ENCODE measurements at regions of chr1 and their contacts with region 1.

Region 1: DNA sequence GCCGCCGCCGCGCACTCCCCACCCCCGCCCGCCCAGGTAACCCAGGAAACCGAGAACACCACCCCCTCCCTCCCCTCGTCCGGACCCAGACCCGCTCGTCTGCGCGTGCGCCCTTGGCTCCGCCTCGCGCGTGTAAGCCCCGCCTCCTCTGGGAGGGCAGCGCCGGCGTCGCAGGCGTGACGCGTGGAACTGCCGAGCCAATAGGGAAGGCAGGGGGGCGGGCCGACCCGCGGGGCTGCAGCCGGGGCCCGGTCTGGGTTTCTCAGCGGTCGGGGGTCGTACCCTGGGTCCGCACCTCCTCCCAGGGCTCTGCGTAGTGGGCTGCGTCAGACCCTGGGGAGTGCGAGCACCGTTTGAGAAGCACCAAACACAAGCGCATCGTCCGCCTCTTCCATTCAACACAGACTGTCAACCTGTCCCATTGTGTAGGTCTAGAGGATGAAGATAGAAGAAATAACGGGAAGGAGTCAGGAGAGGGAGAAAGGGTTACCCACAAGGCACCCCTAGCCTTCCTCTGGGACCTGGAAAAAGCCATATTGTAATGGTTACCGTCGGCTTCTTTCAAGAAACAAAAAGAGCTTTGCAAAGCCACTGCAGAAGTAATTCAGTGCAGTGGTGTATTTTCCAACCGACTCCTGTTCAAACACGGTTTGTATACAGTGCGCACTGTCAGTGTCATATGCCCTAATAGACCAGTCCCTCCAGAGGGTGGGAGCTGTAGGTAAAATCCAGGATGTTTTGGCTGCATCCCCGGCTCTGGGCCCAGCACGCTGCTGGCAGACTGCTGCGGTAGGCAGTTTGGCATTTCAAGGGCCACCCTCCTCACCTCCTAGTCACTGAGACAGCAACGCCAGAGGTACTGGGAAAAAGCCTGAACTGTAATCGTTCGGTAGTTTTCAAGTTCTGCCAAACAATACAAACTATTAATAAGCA is 473 bp upstream of the LYST start:
- DNase-seq: peak; percentile 99
- ATAC-seq: peak; percentile 71
- H3K4me3 Mint-ChIP-seq: peak overlapping the region; percentile 98
- H3K27ac Mint-ChIP-seq: peak overlapping the region; percentile 99
- H3K4me1 Mint-ChIP-seq: peaks cover 64% of the 10 kb centered on the region
- H3K27me3 Mint-ChIP-seq: no peaks in the 10 kb centered on the region
- CTCF ChIP-seq: no peak

Region 2: DNA sequence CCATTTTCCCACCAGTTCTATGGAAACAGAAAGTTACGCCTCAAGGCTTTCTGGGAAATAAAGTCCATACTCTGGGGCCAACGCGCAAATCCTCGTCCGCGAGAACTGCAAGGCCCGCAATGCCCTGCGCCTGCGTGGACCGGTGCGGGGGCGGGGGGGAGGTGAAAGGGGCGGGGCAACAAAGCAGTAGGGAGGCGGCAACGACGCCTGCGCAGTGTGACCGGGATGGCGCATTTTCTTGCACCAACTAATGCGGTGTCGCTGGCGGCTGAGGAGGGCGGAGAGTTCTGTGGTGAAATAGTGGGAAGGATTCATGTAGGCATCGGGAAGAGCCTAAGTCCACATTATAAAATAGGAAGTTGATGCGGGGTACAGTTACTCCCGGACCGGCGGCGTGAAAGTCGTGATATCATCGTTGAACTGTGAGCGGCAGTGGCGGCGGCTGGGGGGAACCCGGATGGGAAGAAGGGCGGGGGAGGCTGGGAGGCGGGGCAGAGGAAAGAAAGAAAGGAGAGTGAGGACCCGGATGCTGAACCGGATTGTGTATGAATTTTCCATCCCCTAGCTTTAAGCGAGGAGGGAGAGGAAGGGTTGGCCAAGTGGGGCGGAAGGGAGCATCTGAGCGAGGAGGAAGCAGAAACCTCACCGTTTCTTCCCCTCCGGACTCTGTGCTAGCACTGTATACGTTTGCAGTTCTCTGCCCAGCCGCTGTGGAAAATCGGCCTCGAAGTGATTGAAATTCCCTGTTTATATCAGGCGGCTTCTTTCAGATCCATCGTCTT is 538.6 kb before region 1 on chr1 and contains the start of gene GGPS1:
- CTCF ChIA-PET with region 1: no interaction called
- POLR2A ChIA-PET with region 1: no interaction called
- intact Hi-C with region 1: loop called (anchors 2 kb)
- DNase-seq: peak; percentile 90
- ATAC-seq: peak; percentile 75
- H3K4me3 Mint-ChIP-seq: no peak within 1 kb of the TSS
- H3K27ac Mint-ChIP-seq: no peak within 1 kb of the TSS
- H3K4me1 Mint-ChIP-seq: peaks cover 27% of the 10 kb centered on the region
- H3K27me3 Mint-ChIP-seq: no peaks in the 10 kb centered on the region
- CTCF ChIP-seq: no peak
- total RNA-seq, gene GGPS1: 25.4 and 33.8 TPM in 2 replicates

Region 3: DNA sequence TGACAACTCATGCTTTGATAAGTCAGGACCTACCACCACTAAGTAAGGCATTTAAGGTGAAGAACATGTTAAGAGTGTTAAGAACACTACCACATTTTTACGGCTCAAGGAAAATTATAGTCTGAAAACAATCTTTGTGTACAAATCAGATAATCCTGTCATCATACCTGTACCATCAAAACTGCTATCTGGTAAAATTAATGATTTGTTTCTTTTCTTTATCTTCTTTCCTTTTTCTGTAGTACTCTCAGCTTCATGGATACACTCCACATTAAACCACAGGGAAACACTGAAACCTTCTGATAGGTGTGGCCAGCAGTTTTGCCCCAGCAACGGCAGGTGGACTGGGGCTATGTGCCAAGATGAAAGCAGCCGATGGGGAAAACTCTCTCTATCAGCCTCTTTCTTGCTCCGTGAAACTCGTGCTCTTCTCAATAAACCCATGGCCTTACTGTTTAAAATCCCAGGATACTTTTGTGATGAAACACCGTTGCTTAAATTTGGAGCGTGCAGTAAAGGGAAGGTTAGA is 75.6 kb before region 1 on chr1:
- CTCF ChIA-PET with region 1: no interaction called
- POLR2A ChIA-PET with region 1: no interaction called
- intact Hi-C with region 1: no loop called
- DNase-seq: no peak
- ATAC-seq: no peak
- H3K4me3 Mint-ChIP-seq: no peak overlapping the region
- H3K27ac Mint-ChIP-seq: peak overlapping the region; percentile 56
- H3K4me1 Mint-ChIP-seq: peaks cover 13% of the 10 kb centered on the region
- H3K27me3 Mint-ChIP-seq: no peaks in the 10 kb centered on the region
- CTCF ChIP-seq: no peak

Region 4: DNA sequence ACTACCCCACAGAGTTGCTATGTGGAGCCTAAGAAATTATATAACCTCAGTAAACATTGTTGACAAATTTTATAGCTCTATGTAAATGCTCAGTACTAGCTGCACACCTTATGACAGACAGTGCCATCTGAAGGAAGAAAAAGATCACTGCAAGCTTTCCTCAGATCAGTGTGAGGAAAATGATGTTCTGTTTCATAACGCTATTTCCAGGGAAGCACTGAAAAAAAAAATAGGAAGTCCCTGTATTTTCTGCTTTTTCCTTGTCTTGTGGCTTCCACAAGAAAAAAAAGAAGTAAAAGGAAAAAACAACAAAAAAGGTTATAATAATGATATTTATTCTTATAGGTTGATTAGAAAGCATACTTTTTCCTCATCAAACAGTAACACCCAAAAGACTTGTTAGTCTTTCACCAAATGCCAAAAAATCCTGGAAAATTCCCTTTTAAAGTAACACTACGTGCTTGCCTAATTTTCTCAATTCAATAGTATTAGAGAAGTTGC is 23.7 kb before region 1 on chr1:
- CTCF ChIA-PET with region 1: interaction called, 11 read pairs
- POLR2A ChIA-PET with region 1: interaction called, 39 read pairs
- intact Hi-C with region 1: loop called (anchors 1 kb)
- DNase-seq: no peak
- ATAC-seq: peak; percentile 60
- H3K4me3 Mint-ChIP-seq: no peak overlapping the region
- H3K27ac Mint-ChIP-seq: peak overlapping the region; percentile 62
- H3K4me1 Mint-ChIP-seq: peaks cover 86% of the 10 kb centered on the region
- H3K27me3 Mint-ChIP-seq: no peaks in the 10 kb centered on the region
- CTCF ChIP-seq: no peak

Region 5: GRCh38 chr1:235883261-235883927 is 16.2 kb after region 1 on chr1:
- CTCF ChIA-PET with region 1: no interaction called
- POLR2A ChIA-PET with region 1: interaction called, 24 read pairs
- intact Hi-C with region 1: loop called (anchors 1 kb)
- DNase-seq: no peak
- ATAC-seq: peak; percentile 15
- H3K4me3 Mint-ChIP-seq: no peak overlapping the region
- H3K27ac Mint-ChIP-seq: no peak overlapping the region
- H3K4me1 Mint-ChIP-seq: peaks cover 59% of the 10 kb centered on the region
- H3K27me3 Mint-ChIP-seq: no peaks in the 10 kb centered on the region
- CTCF ChIP-seq: no peak

Region 6: DNA sequence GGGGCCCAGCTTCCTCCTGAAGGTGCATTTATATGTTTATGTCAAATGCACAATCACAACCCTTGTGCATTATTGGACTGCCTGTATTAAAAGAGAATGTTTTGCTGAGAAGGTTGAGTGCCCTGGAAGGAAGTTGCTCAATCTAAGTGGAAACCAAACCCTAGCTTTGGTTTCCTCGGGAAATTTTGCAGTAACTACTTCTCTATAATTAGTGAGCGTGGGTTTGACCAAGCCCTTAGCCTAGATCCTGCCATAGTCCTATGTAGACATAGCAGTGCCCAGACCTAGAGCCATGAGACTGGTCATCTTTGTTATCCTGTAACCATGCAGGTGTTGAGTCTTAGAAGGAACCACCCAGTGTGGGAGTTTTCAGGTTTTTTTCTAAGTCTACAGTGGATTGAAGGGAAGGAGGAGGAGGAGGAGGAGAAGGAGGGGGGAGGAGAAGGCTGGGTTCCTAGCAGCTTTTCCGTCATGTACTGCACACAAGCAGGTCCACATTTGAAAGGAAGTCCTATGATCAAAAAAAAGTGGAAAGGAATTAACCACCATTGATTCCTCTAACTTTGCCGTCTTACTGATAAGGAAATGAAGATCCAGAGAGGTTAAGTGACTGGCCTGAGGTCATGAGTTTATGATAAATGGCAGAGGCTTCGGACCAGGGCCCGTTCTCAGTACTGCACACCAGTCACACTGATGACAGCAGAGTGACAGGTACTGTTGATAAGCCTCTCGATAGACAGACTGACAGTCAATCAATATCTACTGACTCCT is 71.7 kb after region 1 on chr1:
- CTCF ChIA-PET with region 1: interaction called, 5 read pairs
- POLR2A ChIA-PET with region 1: interaction called, 60 read pairs
- intact Hi-C with region 1: loop called (anchors 1 kb)
- DNase-seq: no peak
- ATAC-seq: peak; percentile 80
- H3K4me3 Mint-ChIP-seq: peak overlapping the region; percentile 76
- H3K27ac Mint-ChIP-seq: peak overlapping the region; percentile 86
- H3K4me1 Mint-ChIP-seq: peaks cover 90% of the 10 kb centered on the region
- H3K27me3 Mint-ChIP-seq: no peaks in the 10 kb centered on the region
- CTCF ChIP-seq: no peak

Region 7: GRCh38 chr1:235999259-235999925 is 132.2 kb after region 1 on chr1:
- CTCF ChIA-PET with region 1: no interaction called
- POLR2A ChIA-PET with region 1: interaction called, 4 read pairs
- intact Hi-C with region 1: loop called (anchors 1 kb)
- DNase-seq: no peak
- ATAC-seq: peak; percentile 89
- H3K4me3 Mint-ChIP-seq: peak overlapping the region; percentile 58
- H3K27ac Mint-ChIP-seq: peak overlapping the region; percentile 89
- H3K4me1 Mint-ChIP-seq: peaks cover 15% of the 10 kb centered on the region
- H3K27me3 Mint-ChIP-seq: peaks cover 3% of the 10 kb centered on the region
- CTCF ChIP-seq: no peak

Region 8: DNA sequence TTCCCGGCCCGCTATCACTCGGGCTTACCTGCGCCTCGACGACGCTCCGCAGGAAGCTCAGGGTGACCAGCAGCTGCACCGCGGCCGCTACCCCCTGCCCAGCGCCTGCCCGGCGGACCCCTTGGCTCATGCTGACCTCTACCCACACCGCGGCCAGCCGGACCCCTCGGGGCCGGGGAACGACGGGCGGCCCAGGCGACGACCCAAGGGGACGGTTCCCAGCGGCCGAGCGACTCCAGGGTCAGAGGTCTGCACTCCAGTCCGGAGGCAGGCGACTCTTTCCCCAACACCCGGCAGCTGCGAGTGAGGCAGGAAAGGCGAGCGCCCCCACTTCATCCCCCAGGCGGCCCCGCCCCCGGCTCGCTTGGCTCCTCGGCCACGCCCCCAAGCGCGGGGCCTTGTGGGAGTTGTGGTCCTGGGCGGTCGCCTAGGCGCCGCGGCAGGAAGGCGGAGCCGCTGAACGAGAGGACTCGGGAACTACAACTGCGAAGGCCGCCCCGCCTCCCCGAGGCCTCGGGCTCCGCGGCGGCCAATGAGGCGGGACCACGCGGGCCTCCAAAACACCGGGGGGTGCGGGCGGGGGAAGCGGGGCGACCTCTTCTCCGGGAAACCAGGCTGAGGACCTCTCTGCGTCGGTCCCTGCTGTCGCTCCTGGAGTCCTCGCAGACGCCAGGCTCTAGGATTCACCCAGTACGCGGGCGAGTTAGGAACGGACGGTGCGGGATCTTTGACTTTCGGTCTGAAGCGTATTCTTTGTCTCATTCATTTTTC is 414.7 kb after region 1 on chr1 and contains the start of gene ERO1B:
- CTCF ChIA-PET with region 1: no interaction called
- POLR2A ChIA-PET with region 1: no interaction called
- intact Hi-C with region 1: loop called (anchors 1 kb)
- DNase-seq: peak; percentile 100
- ATAC-seq: peak; percentile 91
- H3K4me3 Mint-ChIP-seq: peak within 1 kb of the TSS; percentile 97
- H3K27ac Mint-ChIP-seq: peak within 1 kb of the TSS; percentile 89
- H3K4me1 Mint-ChIP-seq: peaks cover 40% of the 10 kb centered on the region
- H3K27me3 Mint-ChIP-seq: no peaks in the 10 kb centered on the region
- CTCF ChIP-seq: no peak
- total RNA-seq, gene ERO1B: 13.2 and 17.5 TPM in 2 replicates